ENCODE measurements at regions of chr10 and their contacts with region 1.

Region 1: GRCh38 chr10:7908541-7909210 is 90.4 kb downstream of the TAF3 start:
- DNase-seq: no peak
- H3K4me3 ChIP-seq: no peak overlapping the region
- H3K27ac ChIP-seq: no peak overlapping the region
- H3K4me1 ChIP-seq: no peaks in the 10 kb centered on the region
- H3K27me3 ChIP-seq: no peaks in the 10 kb centered on the region
- CTCF ChIP-seq: no peak
- POLR2A ChIP-seq: no peak

Region 2: DNA sequence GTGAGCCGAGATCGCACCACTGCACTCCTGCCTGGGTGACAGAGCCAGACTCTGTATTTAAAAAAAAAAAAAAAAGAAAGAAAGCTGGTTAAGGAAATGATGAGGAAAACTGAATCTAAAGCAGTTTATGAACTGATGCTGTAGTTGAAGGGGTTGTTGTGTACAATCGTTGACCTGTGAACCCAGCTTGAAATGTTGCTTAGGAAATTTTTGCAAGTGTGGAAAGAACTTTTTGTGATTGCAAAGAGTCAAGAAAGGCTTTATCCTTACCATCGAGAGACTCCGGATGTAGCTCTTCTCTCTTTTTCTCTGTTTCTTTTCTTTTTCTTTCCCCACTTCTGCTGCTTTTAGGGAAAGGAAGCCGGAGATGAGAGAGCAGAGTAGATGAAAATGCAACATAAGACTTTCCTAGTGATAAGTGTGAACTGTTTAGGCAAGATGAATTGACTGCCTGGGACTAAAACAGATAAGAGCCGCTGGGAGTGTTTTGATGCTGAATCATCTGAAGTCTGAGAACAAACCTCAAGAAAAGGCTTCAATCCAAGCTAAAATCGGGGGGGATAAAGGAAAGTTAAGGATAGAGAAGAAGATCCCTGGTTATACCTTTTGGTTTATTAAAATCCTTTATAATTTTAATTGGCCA is 21.4 kb before region 1 on chr10:
- CTCF ChIA-PET with region 1: no interaction called
- POLR2A ChIA-PET with region 1: no interaction called
- dilution Hi-C with region 1: no loop called
- intact Hi-C with region 1: no loop called
- DNase-seq: peak; percentile 49
- H3K4me3 ChIP-seq: no peak overlapping the region
- H3K27ac ChIP-seq: no peak overlapping the region
- H3K4me1 ChIP-seq: peaks cover 13% of the 10 kb centered on the region
- H3K27me3 ChIP-seq: no peaks in the 10 kb centered on the region
- CTCF ChIP-seq: no peak
- POLR2A ChIP-seq: no peak

Region 3: GRCh38 chr10:8053446-8054290 is 145.0 kb after region 1 on chr10:
- CTCF ChIA-PET with region 1: no interaction called
- POLR2A ChIA-PET with region 1: no interaction called
- dilution Hi-C with region 1: no loop called
- intact Hi-C with region 1: no loop called
- DNase-seq: peak; percentile 87
- H3K4me3 ChIP-seq: peak overlapping the region; percentile 9 to 95 (median 72)
- H3K27ac ChIP-seq: peak overlapping the region; percentile 96
- H3K4me1 ChIP-seq: peaks cover 29% of the 10 kb centered on the region
- H3K27me3 ChIP-seq: no peaks in the 10 kb centered on the region
- CTCF ChIP-seq: peak; percentile 71 to 95
- POLR2A ChIP-seq: peak; percentile 53

Region 4: DNA sequence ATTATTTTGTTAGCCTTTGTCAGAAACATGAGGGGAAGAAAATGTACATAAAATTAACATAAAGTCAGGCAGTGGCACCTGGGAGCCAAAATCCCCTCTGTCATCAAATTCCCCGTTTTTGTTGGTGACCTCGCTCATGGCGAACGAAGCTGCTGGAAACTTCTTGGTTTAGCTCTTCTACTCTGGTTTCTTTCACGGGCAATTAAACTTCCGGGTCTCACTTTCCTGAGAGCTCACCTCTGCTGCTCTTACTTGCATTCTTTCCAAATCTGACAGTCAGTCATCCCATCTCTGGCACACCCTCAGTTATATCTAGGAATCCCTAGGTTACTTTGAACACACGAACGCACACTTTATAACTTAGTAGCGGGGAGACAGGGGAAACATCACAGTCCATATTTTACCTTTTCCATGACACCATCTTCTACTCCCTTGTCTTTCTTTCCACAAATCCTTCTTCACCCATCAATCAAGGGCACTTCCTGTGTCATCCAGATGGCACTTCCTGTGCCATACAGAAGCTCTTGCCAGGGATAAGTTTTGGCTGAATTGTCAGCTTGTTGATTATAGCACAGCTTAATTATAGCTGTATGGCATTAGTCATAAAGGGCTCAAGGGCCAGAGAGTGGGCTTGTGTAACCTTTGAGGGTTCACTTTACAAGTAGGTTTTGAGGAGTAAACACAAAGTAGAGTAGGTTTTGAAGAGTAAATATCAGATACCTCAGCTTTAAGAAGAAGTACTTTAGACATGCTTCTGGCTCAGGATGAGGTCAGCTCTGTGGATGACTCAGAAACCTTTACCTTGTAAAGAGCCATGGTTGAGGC is 250.9 kb after region 1 on chr10:
- CTCF ChIA-PET with region 1: no interaction called
- POLR2A ChIA-PET with region 1: no interaction called
- dilution Hi-C with region 1: no loop called
- intact Hi-C with region 1: loop called (anchors 10 kb)
- DNase-seq: no peak
- H3K4me3 ChIP-seq: no peak overlapping the region
- H3K27ac ChIP-seq: no peak overlapping the region
- H3K4me1 ChIP-seq: no peaks in the 10 kb centered on the region
- H3K27me3 ChIP-seq: no peaks in the 10 kb centered on the region
- CTCF ChIP-seq: no peak
- POLR2A ChIP-seq: no peak